T-cell (primary cell): ENCODE measurements at regions of chr1 and their contacts with region 1.

Region 1: GRCh38 chr1:28642847-28643635 is at the start of gene TAF12:
- DNase-seq: peak; percentile 83 to 98 (median 91)
- ATAC-seq: peak; percentile 85 to 87 (median 86)
- H3K4me3 ChIP-seq: peak within 1 kb of the TSS; percentile 88 to 92
- H3K4me3 Mint-ChIP-seq: peak within 1 kb of the TSS; percentile 94 to 100 (median 95)
- H3K27ac ChIP-seq: peak within 1 kb of the TSS; percentile 95
- H3K27ac Mint-ChIP-seq: peak within 1 kb of the TSS; percentile 96 to 99
- H3K4me1 ChIP-seq: peaks cover 28 to 34% of the 10 kb centered on the region in 2 experiments
- H3K4me1 Mint-ChIP-seq: peaks cover 58% of the 10 kb centered on the region in 3 donors
- H3K27me3 ChIP-seq: no peaks in the 10 kb centered on the region
- H3K27me3 Mint-ChIP-seq: no peaks in the 10 kb centered on the region
- total RNA-seq, gene TAF12: 17.3 to 22.7 (median 20.6) TPM

Region 2: DNA sequence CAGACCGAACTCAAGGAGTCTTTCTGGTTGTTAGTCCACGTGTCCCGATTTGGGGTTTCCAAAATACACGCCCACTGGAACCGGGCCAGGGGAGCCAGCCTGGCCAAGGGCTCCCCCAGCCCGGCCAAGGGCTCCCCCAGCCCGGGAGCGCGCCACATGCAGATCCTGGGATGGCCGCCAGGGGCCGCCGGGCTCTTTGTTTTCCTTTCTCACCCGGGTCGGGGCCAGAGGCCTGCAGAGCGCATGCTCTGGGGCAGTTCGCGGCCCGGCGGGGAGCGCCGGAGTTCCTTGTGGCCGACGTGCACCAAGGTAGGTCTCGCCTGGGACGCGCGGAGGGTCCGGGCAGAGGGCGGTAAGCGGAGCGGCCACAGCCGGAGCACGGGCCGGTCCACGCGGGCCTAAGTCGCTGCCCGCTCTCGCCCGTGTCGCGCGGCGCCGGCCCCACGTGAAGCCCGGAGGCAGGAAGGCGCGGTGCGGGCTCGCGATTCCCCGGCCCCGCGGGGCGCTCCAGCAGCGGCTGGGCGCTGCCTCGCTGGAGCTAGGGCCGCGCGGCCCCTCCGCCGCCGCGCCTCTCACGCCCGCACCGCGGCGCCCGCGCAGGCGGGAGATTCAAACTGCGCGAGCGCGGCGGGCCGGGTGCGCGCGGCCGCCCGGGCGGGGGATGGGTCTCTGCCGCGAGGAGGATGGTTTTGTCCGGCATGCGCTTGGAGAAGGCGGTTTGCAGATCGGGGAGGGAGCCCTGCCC is 124.9 kb before region 1 on chr1:
- CTCF ChIA-PET with region 1: no interaction called
- POLR2A ChIA-PET with region 1: interaction called, 6 to 10 read pairs
- DNase-seq: peak; percentile 67 to 90 (median 80)
- ATAC-seq: peak; percentile 82 to 92 (median 88)
- H3K4me3 ChIP-seq: peak overlapping the region; percentile 52 to 54
- H3K4me3 Mint-ChIP-seq: peak overlapping the region; percentile 74 to 88 (median 85)
- H3K27ac ChIP-seq: peak overlapping the region; percentile 35
- H3K27ac Mint-ChIP-seq: peak overlapping the region; percentile 76 to 82
- H3K4me1 ChIP-seq: peaks cover 2 to 23% of the 10 kb centered on the region in 2 experiments
- H3K4me1 Mint-ChIP-seq: peaks cover 23 to 35% (median 23%) of the 10 kb centered on the region in 3 donors
- H3K27me3 ChIP-seq: no peaks in the 10 kb centered on the region
- H3K27me3 Mint-ChIP-seq: no peaks in the 10 kb centered on the region

Region 3: GRCh38 chr1:28552758-28553663 is 90.0 kb before region 1 on chr1 and contains the start of gene TRNAU1AP:
- CTCF ChIA-PET with region 1: no interaction called
- POLR2A ChIA-PET with region 1: interaction called in 1 of 2 experiments, 12 read pairs
- DNase-seq: peak; percentile 92 to 98 (median 96)
- ATAC-seq: peak; percentile 93 to 97 (median 95)
- H3K4me3 ChIP-seq: peak within 1 kb of the TSS; percentile 88 to 89
- H3K4me3 Mint-ChIP-seq: peak within 1 kb of the TSS; percentile 91 to 99 (median 98)
- H3K27ac ChIP-seq: peak within 1 kb of the TSS; percentile 77
- H3K27ac Mint-ChIP-seq: peak within 1 kb of the TSS; percentile 95 to 97
- H3K4me1 ChIP-seq: peaks cover 2 to 20% of the 10 kb centered on the region in 2 experiments
- H3K4me1 Mint-ChIP-seq: peaks cover 22 to 27% (median 26%) of the 10 kb centered on the region in 3 donors
- H3K27me3 ChIP-seq: no peaks in the 10 kb centered on the region
- H3K27me3 Mint-ChIP-seq: no peaks in the 10 kb centered on the region
- total RNA-seq, gene TRNAU1AP: 28.6 to 47.6 (median 41.3) TPM

Region 4: DNA sequence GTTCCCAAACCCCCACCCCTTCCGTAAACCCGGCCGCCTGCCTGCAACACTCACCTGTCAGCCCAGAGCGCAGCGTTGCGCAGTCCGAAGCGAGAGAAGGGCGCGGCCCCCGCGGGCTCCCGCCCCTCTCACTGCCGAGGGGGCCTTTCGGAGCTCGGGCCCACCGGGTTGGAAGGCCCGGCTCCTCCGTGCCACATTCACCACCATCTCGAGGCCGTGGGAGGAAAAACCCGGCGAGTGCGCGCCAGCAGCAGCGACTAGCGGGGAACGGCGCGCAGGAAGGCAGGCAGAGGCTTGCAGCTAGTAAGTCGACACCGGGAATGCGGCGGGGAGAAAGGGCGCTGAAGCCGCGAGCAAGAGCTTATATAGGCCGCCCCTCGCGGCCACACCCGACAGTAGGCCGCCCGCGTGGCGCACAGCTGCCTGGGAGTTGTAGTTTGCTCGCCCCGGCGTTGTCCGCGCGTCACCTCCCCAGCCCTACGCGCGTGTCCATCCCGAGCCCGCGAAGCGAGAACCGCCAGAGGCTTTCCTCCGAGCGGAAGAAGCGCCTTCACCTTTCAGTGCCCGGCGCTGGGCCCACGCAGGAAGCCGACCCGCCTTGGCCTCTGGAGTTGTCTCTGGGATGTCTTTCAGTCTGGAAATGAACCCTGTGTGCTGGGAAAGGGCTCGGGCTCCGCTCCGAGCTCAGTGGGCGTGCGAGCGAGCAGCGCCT is 61.3 kb before region 1 on chr1:
- CTCF ChIA-PET with region 1: interaction called in 1 of 2 experiments, 22 read pairs
- POLR2A ChIA-PET with region 1: interaction called, 9 to 65 read pairs
- DNase-seq: peak; percentile 74 to 95 (median 84)
- ATAC-seq: peak; percentile 87 to 92 (median 90)
- H3K4me3 ChIP-seq: peak overlapping the region; percentile 91 to 95
- H3K4me3 Mint-ChIP-seq: peak overlapping the region; percentile 89 to 97 (median 92)
- H3K27ac ChIP-seq: peak overlapping the region; percentile 70
- H3K27ac Mint-ChIP-seq: peak overlapping the region; percentile 92 to 93
- H3K4me1 ChIP-seq: peaks cover 11 to 39% of the 10 kb centered on the region in 2 experiments
- H3K4me1 Mint-ChIP-seq: peaks cover 36 to 52% (median 38%) of the 10 kb centered on the region in 3 donors
- H3K27me3 ChIP-seq: no peaks in the 10 kb centered on the region
- H3K27me3 Mint-ChIP-seq: no peaks in the 10 kb centered on the region

Region 5: DNA sequence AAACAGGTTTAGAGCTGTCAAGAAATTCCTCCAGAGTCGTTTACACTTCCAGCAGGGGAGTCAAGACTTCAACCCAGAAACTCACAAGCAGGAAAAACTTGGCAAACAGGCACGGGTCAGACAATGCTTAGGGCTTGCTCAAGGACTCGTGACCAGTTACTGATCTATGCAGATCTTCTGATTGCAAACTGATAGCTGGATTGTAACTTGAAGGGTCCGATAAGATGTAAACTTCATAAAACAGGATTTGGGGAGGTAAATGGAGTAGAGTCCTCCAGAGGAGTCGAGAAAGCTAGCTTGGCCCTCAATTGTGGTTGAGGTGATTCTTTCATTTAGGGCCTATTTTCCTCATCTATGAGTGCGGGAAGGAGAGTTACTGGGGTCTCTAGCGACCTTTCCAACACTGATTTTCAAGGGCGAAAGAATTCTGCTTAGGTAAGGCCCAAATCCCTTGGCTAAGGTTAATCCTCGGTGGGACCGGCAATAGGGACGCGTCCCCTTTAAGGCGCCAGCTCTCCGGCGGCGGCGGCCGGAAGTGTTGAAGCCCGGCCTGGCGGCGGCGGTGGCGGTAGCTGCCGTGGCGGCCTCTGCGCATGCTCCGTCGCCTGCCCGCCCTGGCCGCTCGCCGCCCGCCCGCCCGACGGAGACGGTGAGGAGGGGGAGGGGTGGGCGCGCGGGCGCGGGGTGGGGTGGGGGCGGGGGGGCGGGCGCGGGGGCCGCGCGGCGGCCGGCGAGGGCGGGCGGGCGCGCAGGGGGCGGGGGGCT is 25.3 kb after region 1 on chr1 and contains the start of gene GMEB1:
- CTCF ChIA-PET with region 1: interaction called, 8 to 33 read pairs
- POLR2A ChIA-PET with region 1: interaction called, 7 to 37 read pairs
- DNase-seq: peak; percentile 55 to 91 (median 76)
- ATAC-seq: peak; percentile 74 to 80 (median 78)
- H3K4me3 ChIP-seq: peak within 1 kb of the TSS; percentile 89 to 100
- H3K4me3 Mint-ChIP-seq: peak within 1 kb of the TSS; percentile 85 to 94 (median 92)
- H3K27ac ChIP-seq: peak within 1 kb of the TSS; percentile 97
- H3K27ac Mint-ChIP-seq: peak within 1 kb of the TSS; percentile 99
- H3K4me1 ChIP-seq: peaks cover 8 to 37% of the 10 kb centered on the region in 2 experiments
- H3K4me1 Mint-ChIP-seq: peaks cover 20 to 25% (median 22%) of the 10 kb centered on the region in 3 donors
- H3K27me3 ChIP-seq: no peaks in the 10 kb centered on the region
- H3K27me3 Mint-ChIP-seq: no peaks in the 10 kb centered on the region
- total RNA-seq, gene GMEB1: 15.2 to 19.0 (median 18.4) TPM

Region 6: GRCh38 chr1:28756846-28757245 is 113.8 kb after region 1 on chr1:
- CTCF ChIA-PET with region 1: interaction called in 1 of 2 experiments, 10 read pairs
- POLR2A ChIA-PET with region 1: interaction called in 1 of 2 experiments, 13 read pairs
- DNase-seq: peak in 2 of 35 experiments; percentile 10 to 38
- ATAC-seq: peak in 2 of 4 experiments; percentile 46 to 50
- H3K4me3 ChIP-seq: no peak overlapping the region
- H3K4me3 Mint-ChIP-seq: no peak overlapping the region
- H3K27ac ChIP-seq: no peak overlapping the region
- H3K27ac Mint-ChIP-seq: peak overlapping the region in 1 of 2 donors; percentile 77
- H3K4me1 ChIP-seq: peaks cover 14 to 40% of the 10 kb centered on the region in 2 experiments
- H3K4me1 Mint-ChIP-seq: peaks cover 36 to 38% (median 37%) of the 10 kb centered on the region in 3 donors
- H3K27me3 ChIP-seq: no peaks in the 10 kb centered on the region
- H3K27me3 Mint-ChIP-seq: no peaks in the 10 kb centered on the region

Region 7: GRCh38 chr1:28775121-28775944 is 132.3 kb after region 1 on chr1:
- CTCF ChIA-PET with region 1: no interaction called
- POLR2A ChIA-PET with region 1: interaction called in 1 of 2 experiments, 10 read pairs
- DNase-seq: peak; percentile 47 to 80 (median 67)
- ATAC-seq: peak; percentile 91 to 95 (median 94)
- H3K4me3 ChIP-seq: peak overlapping the region; percentile 64 to 76
- H3K4me3 Mint-ChIP-seq: peak overlapping the region; percentile 75 to 85 (median 78)
- H3K27ac ChIP-seq: peak overlapping the region; percentile 64
- H3K27ac Mint-ChIP-seq: peak overlapping the region; percentile 76 to 81
- H3K4me1 ChIP-seq: peaks cover 2 to 16% of the 10 kb centered on the region in 2 experiments
- H3K4me1 Mint-ChIP-seq: peaks cover 5 to 10% (median 9%) of the 10 kb centered on the region in 3 donors
- H3K27me3 ChIP-seq: no peaks in the 10 kb centered on the region
- H3K27me3 Mint-ChIP-seq: no peaks in the 10 kb centered on the region